ENCODE measurements at regions of chr6 and their contacts with region 1.

Region 1: DNA sequence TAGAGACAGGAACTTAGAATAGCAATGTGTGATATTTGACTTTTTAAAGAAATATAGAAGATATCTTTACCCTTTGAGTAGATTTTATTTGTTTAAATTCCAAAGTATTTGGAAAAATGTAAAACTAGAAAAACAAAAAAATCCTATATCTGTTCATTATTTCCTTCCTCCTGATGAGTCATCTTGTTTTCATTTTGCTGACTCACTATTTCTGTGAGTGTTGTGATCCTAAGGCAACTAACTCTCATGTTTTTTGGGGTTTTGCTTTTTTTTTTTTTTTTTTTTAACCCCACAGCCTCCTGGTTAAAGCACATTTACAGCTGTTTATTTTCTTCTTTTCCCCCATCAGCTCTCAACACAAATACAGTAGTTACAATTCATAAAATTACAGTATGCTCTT is 37.8 kb upstream of the THEMIS start:
- DNase-seq: peak in 2 of 9 experiments; percentile 39 to 61
- ATAC-seq: no peak
- H3K4me3 ChIP-seq: no peak overlapping the region
- H3K4me3 Mint-ChIP-seq: no peak overlapping the region
- H3K27ac ChIP-seq: no peak overlapping the region
- H3K27ac Mint-ChIP-seq: peak overlapping the region; percentile 10
- H3K4me1 ChIP-seq: peaks cover 54% of the 10 kb centered on the region
- H3K4me1 Mint-ChIP-seq: peaks cover 68% of the 10 kb centered on the region
- H3K27me3 ChIP-seq: no peaks in the 10 kb centered on the region
- H3K27me3 Mint-ChIP-seq: no peaks in the 10 kb centered on the region
- CTCF ChIP-seq: no peak

Region 2: DNA sequence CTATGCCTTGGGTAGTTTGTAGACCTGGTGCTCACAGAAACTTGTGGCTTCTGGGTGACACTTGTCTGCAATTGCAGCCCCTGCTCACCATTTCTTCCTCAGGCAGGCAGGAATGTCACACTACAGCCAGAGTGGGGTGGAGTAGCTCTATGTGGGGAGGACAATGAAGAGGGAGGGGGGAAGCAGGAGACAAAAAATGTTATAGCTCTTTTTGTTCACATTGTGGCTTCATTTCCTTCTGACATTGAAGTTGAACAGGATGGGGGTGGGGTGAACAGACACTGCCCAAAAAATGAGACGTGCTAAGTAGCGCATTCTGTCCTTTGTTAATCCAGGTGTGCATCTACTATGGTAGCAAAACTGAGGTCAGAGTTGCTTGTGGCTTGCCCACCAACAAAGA is 37.8 kb before region 1 on chr6 and contains the start of gene THEMIS:
- CTCF ChIA-PET with region 1: interaction called, 4 read pairs
- POLR2A ChIA-PET with region 1: interaction called, 10 read pairs
- intact Hi-C with region 1: loop called in 1 of 2 experiments (anchors 2 kb)
- DNase-seq: peak in 8 of 9 experiments; percentile 29 to 86 (median 64)
- ATAC-seq: peak; percentile 72
- H3K4me3 ChIP-seq: peak within 1 kb of the TSS; percentile 69 to 79
- H3K4me3 Mint-ChIP-seq: peak within 1 kb of the TSS; percentile 98
- H3K27ac ChIP-seq: peak within 1 kb of the TSS; percentile 55 to 77
- H3K27ac Mint-ChIP-seq: peak within 1 kb of the TSS; percentile 99
- H3K4me1 ChIP-seq: peaks cover 39% of the 10 kb centered on the region
- H3K4me1 Mint-ChIP-seq: peaks cover 61% of the 10 kb centered on the region
- H3K27me3 ChIP-seq: no peaks in the 10 kb centered on the region
- H3K27me3 Mint-ChIP-seq: no peaks in the 10 kb centered on the region
- CTCF ChIP-seq: no peak
- total RNA-seq, gene THEMIS: 26.3 to 29.3 TPM

Region 3: DNA sequence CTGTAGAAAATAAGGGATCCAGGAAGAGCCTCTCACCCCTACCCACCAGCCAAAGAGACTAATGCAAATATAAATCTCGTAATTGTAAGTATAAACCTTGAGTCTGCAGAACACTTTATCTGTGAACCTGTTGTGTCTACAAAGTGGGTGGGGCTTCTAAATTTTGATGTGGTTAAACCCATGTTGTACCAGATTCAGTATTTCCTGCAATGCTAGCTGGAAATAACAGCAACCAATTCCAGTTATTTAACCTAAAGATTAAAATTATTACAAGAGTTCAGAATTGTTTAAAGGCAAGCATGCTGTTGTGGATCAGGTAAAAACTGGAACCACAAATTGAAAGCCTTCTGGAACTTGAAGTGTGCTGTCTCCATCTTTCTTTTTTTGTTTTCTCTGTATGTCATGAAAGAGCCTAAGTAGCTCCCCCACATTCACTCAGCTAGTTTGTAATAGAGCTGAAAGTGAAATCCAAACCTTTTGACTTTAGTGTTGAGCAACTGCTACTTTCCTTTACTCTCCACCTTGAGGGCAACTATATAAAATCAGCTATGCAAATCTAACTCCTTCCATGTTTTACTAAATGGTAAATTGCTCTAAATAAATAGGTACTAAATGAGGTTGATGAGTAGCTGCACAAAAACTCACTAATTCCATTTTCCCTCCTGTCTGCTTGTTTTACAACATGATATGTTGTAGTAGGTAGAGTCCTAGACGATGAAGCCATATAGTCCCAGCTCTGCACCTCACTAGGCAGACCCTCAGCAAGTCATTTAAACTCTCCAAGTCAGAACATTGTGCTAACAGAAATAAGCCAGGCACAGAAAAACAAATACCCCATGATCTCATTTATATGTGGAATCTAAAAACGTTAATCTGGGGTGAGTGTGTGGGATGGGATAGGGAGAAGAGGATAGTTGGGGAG is 19.9 kb before region 1 on chr6:
- CTCF ChIA-PET with region 1: interaction called, 8 read pairs
- POLR2A ChIA-PET with region 1: interaction called, 21 read pairs
- intact Hi-C with region 1: loop called (anchors 1 to 2 kb)
- DNase-seq: peak in 3 of 9 experiments; percentile 24 to 78 (median 61)
- ATAC-seq: peak; percentile 74
- H3K4me3 ChIP-seq: peak overlapping the region; percentile 57 to 62
- H3K4me3 Mint-ChIP-seq: peak overlapping the region; percentile 92
- H3K27ac ChIP-seq: peak overlapping the region; percentile 39 to 58
- H3K27ac Mint-ChIP-seq: peak overlapping the region; percentile 95
- H3K4me1 ChIP-seq: peaks cover 73% of the 10 kb centered on the region
- H3K4me1 Mint-ChIP-seq: peaks cover 80% of the 10 kb centered on the region
- H3K27me3 ChIP-seq: no peaks in the 10 kb centered on the region
- H3K27me3 Mint-ChIP-seq: no peaks in the 10 kb centered on the region
- CTCF ChIP-seq: no peak

Region 4: GRCh38 chr6:127924440-127924839 is 14.3 kb before region 1 on chr6:
- CTCF ChIA-PET with region 1: interaction called, 7 read pairs
- POLR2A ChIA-PET with region 1: interaction called, 21 read pairs
- intact Hi-C with region 1: loop called (anchors 1 to 2 kb)
- DNase-seq: peak in 1 of 9 experiments; percentile 46
- ATAC-seq: peak; percentile 51
- H3K4me3 ChIP-seq: no peak overlapping the region
- H3K4me3 Mint-ChIP-seq: no peak overlapping the region
- H3K27ac ChIP-seq: no peak overlapping the region
- H3K27ac Mint-ChIP-seq: peak overlapping the region; percentile 12
- H3K4me1 ChIP-seq: peaks cover 55% of the 10 kb centered on the region
- H3K4me1 Mint-ChIP-seq: peaks cover 56% of the 10 kb centered on the region
- H3K27me3 ChIP-seq: no peaks in the 10 kb centered on the region
- H3K27me3 Mint-ChIP-seq: no peaks in the 10 kb centered on the region
- CTCF ChIP-seq: no peak

Region 5: GRCh38 chr6:127951172-127951917 is 12.6 kb after region 1 on chr6:
- CTCF ChIA-PET with region 1: interaction called, 4 read pairs
- POLR2A ChIA-PET with region 1: interaction called, 22 read pairs
- intact Hi-C with region 1: loop called in 1 of 2 experiments (anchors 2 kb)
- DNase-seq: peak in 2 of 9 experiments; percentile 55 to 76
- ATAC-seq: peak; percentile 83
- H3K4me3 ChIP-seq: peak overlapping the region; percentile 14 to 25
- H3K4me3 Mint-ChIP-seq: peak overlapping the region; percentile 68
- H3K27ac ChIP-seq: peak overlapping the region; percentile 40 to 63
- H3K27ac Mint-ChIP-seq: peak overlapping the region; percentile 92
- H3K4me1 ChIP-seq: peaks cover 58% of the 10 kb centered on the region
- H3K4me1 Mint-ChIP-seq: peaks cover 75% of the 10 kb centered on the region
- H3K27me3 ChIP-seq: no peaks in the 10 kb centered on the region
- H3K27me3 Mint-ChIP-seq: no peaks in the 10 kb centered on the region
- CTCF ChIP-seq: no peak

Region 6: DNA sequence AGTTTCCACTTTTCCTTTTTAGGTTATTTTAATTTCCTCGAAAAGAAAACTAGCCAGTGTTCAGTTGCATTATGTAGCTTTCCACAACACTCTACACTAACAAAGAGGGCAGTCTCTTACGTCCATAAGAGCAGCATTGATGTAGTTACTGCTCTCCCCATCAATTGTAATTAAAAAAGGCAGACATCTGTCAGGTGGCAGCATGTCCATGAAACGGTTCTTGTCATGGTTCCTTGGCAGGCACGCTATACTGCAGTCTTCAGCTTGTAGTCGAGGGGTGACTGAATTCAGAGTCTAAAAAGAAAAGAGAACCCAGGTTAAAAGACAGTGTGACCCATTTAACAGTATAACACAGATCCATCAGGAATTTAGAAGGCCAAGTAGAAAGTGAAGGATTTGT is 42.3 kb after region 1 on chr6:
- CTCF ChIA-PET with region 1: interaction called, 5 read pairs
- POLR2A ChIA-PET with region 1: interaction called, 4 read pairs
- intact Hi-C with region 1: loop called (anchors 2 to 5 kb)
- DNase-seq: no peak
- ATAC-seq: no peak
- H3K4me3 ChIP-seq: peak overlapping the region in 1 of 2 experiments; percentile 3
- H3K4me3 Mint-ChIP-seq: peak overlapping the region; percentile 76
- H3K27ac ChIP-seq: peak overlapping the region in 1 of 2 experiments; percentile 0
- H3K27ac Mint-ChIP-seq: peak overlapping the region; percentile 78
- H3K4me1 ChIP-seq: peaks cover 40% of the 10 kb centered on the region
- H3K4me1 Mint-ChIP-seq: peaks cover 61% of the 10 kb centered on the region
- H3K27me3 ChIP-seq: no peaks in the 10 kb centered on the region
- H3K27me3 Mint-ChIP-seq: no peaks in the 10 kb centered on the region
- CTCF ChIP-seq: no peak